ENCODE measurements at regions of chr12 and their contacts with region 1.

Region 1: DNA sequence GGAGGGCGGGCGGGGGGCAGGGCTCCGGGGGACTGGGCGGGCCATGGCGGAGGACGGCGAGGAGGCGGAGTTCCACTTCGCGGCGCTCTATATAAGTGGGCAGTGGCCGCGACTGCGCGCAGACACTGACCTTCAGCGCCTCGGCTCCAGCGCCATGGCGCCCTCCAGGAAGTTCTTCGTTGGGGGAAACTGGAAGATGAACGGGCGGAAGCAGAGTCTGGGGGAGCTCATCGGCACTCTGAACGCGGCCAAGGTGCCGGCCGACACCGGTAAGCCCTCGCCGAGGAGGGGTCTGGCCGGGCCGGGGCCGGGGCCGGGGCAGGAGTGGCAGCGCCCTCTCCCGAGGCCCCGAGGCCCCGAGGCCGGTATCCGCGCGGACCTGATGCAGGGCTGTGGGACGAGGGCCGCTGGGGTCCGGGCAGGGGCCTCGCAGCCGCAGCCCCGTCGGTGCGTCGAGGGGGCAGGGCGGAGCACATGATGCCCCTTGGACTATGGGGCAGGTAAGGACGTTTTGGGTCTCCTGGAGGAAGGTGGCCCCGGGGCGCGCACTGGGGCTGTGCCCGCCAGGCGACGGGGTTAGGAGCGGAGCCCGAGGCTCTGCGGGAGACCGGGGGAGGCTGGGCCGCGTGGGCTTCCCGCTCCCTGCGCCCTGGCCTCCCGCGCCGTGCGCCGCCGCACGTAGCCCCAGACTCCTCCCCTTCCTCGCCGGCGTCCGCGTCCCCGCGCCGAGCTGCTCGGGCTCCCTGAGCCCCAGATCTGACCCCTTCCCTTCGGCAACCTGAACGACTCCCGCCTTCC is at the start of gene TPI1:
- DNase-seq: peak; percentile 48 to 86 (median 77)
- ATAC-seq: peak; percentile 70
- H3K4me3 ChIP-seq: peak within 1 kb of the TSS; percentile 54 to 64
- H3K4me3 Mint-ChIP-seq: peak within 1 kb of the TSS; percentile 89
- H3K27ac ChIP-seq: peak within 1 kb of the TSS; percentile 53 to 81
- H3K27ac Mint-ChIP-seq: peak within 1 kb of the TSS; percentile 85
- H3K4me1 ChIP-seq: peaks cover 49% of the 10 kb centered on the region
- H3K4me1 Mint-ChIP-seq: peaks cover 57% of the 10 kb centered on the region
- H3K27me3 ChIP-seq: no peaks in the 10 kb centered on the region
- H3K27me3 Mint-ChIP-seq: no peaks in the 10 kb centered on the region
- CTCF ChIP-seq: no peak
- total RNA-seq, gene TPI1: 59.6 to 64.0 TPM

Region 2: DNA sequence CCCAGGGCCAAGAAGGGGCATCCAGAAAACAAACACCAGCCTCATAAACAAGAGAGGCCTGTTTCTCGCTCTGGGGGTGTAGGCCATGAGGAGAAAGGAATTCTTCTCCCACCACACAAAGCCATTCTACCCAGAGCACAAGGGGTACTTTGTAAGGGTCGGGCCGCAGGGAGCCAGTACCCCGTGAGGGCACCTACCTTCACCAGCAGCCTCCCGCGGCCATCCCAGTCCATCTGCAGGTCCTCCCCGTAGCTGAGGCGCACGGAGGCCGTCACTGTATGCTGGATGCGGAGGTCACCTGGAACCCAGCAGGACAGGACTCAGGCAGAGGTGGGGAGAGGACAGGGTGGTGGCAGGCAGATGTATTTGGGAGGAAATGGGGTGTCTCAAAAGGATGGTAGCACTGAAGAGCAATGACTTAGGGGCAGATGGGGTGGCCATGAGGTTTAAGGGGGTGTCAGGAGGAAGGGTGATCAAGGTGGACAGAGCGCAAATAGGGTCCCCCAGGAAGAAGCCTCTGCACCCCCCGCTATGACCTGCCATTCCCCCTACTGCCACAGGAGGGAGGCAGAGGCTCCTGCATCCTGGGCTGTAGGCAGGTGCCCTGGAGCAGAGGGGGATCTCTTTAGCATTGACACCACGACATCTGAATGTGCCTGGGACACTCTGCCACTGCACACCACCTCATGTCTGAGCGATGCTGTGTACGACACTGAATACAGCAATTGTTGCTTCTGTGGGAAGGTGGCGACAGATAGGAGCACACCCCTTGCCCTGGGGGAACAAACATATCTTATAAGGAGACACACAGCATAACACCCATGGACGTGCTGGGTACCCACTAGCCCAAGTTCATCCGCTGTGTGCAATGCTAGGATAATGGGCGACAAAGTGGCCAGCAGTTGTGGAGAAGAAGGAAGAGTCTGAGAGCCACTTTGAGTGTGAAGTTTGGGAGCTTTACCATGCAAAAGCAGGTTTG is 804.6 kb before region 1 on chr12:
- CTCF ChIA-PET with region 1: no interaction called
- POLR2A ChIA-PET with region 1: no interaction called
- intact Hi-C with region 1: no loop called
- DNase-seq: peak; percentile 39 to 81 (median 64)
- ATAC-seq: peak; percentile 99
- H3K4me3 ChIP-seq: no peak overlapping the region
- H3K4me3 Mint-ChIP-seq: no peak overlapping the region
- H3K27ac ChIP-seq: no peak overlapping the region
- H3K27ac Mint-ChIP-seq: no peak overlapping the region
- H3K4me1 ChIP-seq: no peaks in the 10 kb centered on the region
- H3K4me1 Mint-ChIP-seq: peaks cover 3% of the 10 kb centered on the region
- H3K27me3 ChIP-seq: no peaks in the 10 kb centered on the region
- H3K27me3 Mint-ChIP-seq: peaks cover 3% of the 10 kb centered on the region
- CTCF ChIP-seq: peak; percentile 84

Region 3: DNA sequence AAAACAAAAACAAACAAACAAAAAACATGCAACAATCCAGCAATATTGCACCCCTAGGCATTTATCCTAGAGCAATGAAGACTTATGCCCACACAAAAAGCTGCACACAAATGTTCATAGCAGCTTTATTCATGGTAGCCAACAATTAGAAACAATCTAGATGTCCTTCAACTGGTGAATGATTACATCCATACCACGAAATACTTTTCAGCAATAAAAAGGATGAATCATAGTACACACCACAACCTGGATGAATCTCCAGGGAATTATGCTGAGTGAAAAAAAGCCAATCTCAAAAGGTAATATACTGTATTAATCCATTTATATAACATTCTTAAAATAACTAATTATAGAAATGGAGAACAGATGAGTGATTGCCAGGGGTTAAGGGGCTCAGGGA is 60.4 kb before region 1 on chr12:
- CTCF ChIA-PET with region 1: no interaction called
- POLR2A ChIA-PET with region 1: no interaction called
- intact Hi-C with region 1: no loop called
- DNase-seq: no peak
- ATAC-seq: no peak
- H3K4me3 ChIP-seq: no peak overlapping the region
- H3K4me3 Mint-ChIP-seq: no peak overlapping the region
- H3K27ac ChIP-seq: no peak overlapping the region
- H3K27ac Mint-ChIP-seq: no peak overlapping the region
- H3K4me1 ChIP-seq: no peaks in the 10 kb centered on the region
- H3K4me1 Mint-ChIP-seq: no peaks in the 10 kb centered on the region
- H3K27me3 ChIP-seq: no peaks in the 10 kb centered on the region
- H3K27me3 Mint-ChIP-seq: no peaks in the 10 kb centered on the region
- CTCF ChIP-seq: no peak

Region 4: DNA sequence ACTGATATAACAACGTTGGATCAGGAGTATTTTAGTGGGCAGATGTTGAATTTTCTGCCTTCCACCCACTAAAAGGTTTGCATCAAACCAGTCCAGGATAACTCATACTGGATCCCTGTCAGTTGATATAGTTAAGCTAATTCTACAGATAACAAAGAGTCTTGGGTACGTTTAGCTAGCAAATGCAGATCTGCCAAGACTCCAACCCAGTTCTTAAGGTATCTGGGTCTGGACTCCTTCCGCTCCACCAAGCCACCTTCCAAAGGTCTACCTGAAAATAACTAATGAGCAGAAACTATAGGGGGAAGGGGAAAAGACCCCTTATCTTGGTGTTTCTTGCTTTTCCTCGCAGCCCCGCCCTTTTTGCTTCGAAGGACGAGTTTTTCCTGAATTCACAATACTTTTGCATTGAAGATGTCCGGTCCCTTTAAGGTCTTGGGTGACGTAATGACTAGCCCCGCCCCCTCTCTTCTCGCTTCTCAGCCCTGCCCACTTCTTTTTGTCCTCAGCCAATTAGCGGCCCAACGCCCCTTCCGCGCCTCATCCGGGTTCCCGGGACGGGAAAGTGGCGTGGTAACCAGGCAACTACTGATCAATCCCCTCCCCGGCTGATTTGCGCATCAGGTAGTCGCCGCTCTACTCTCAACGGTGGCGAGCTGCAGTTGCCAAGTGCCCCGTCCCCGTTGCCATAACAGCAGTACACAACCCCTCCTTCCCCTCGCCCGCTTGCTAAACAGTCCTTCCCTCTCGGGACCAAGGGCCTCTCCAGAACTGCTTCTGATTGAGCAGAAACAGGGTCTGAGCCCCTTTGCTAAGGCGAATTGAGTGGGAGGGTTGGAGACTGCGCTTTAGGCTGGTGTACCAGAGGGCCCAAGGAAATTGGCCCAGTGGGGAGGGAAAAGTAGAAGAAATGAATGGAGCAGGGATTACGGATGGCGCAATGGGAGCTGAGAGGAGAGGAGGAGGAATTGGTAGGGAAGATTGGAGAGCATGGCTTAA is 37.0 kb after region 1 on chr12 and contains the start of gene LRRC23:
- CTCF ChIA-PET with region 1: interaction called, 10 read pairs
- POLR2A ChIA-PET with region 1: interaction called, 8 read pairs
- intact Hi-C with region 1: no loop called
- DNase-seq: peak; percentile 92 to 99 (median 97)
- ATAC-seq: peak; percentile 96
- H3K4me3 ChIP-seq: peak within 1 kb of the TSS; percentile 56 to 64
- H3K4me3 Mint-ChIP-seq: peak within 1 kb of the TSS; percentile 5
- H3K27ac ChIP-seq: peak within 1 kb of the TSS; percentile 86 to 88
- H3K27ac Mint-ChIP-seq: no peak within 1 kb of the TSS
- H3K4me1 ChIP-seq: peaks cover 15% of the 10 kb centered on the region
- H3K4me1 Mint-ChIP-seq: no peaks in the 10 kb centered on the region
- H3K27me3 ChIP-seq: no peaks in the 10 kb centered on the region
- H3K27me3 Mint-ChIP-seq: no peaks in the 10 kb centered on the region
- CTCF ChIP-seq: no peak
- total RNA-seq, gene LRRC23: 6.5 to 7.2 TPM

Region 5: DNA sequence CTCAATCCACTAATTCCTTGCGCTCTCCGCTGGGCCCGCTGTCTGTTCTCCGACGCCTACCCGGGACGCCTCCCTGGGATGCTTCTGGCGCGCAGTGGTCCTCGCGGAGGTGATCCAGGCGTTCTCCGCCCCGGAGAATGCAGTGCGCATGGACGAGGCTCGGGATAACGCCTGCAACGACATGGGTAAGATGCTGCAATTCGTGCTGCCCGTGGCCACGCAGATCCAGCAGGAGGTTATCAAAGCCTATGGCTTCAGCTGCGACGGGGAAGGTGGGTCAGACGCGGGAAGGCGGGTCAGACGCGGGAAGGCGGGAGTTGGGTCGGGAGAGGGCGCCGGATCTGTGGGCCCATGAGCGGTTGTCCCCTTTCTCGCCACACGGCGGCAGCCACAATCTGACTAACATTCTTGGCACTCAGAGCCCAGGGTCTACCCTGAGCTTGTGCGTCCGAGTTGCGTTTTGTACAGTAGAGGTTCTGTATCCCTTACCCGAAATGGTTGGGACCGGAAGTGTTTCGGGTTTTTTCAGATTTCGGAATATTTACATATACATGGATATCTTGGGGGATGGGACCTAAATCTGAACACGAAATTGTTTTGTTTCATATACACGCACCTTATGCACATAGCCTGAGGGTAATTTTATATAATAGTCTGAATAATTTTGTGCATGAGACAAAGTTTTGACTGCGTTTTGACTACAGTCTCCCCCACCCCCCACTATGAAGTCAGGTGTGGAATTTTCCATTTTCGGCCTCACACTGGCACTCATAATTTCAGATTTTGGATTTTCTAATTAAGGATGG is 77.0 kb after region 1 on chr12:
- CTCF ChIA-PET with region 1: interaction called, 75 read pairs
- POLR2A ChIA-PET with region 1: interaction called, 45 read pairs
- intact Hi-C with region 1: no loop called
- DNase-seq: peak; percentile 67 to 94 (median 89)
- ATAC-seq: peak; percentile 51
- H3K4me3 ChIP-seq: peak overlapping the region; percentile 90 to 97
- H3K4me3 Mint-ChIP-seq: peak overlapping the region; percentile 99
- H3K27ac ChIP-seq: peak overlapping the region; percentile 94 to 97
- H3K27ac Mint-ChIP-seq: peak overlapping the region; percentile 100
- H3K4me1 ChIP-seq: peaks cover 56% of the 10 kb centered on the region
- H3K4me1 Mint-ChIP-seq: peaks cover 63% of the 10 kb centered on the region
- H3K27me3 ChIP-seq: no peaks in the 10 kb centered on the region
- H3K27me3 Mint-ChIP-seq: no peaks in the 10 kb centered on the region
- CTCF ChIP-seq: peak; percentile 87

Region 6: DNA sequence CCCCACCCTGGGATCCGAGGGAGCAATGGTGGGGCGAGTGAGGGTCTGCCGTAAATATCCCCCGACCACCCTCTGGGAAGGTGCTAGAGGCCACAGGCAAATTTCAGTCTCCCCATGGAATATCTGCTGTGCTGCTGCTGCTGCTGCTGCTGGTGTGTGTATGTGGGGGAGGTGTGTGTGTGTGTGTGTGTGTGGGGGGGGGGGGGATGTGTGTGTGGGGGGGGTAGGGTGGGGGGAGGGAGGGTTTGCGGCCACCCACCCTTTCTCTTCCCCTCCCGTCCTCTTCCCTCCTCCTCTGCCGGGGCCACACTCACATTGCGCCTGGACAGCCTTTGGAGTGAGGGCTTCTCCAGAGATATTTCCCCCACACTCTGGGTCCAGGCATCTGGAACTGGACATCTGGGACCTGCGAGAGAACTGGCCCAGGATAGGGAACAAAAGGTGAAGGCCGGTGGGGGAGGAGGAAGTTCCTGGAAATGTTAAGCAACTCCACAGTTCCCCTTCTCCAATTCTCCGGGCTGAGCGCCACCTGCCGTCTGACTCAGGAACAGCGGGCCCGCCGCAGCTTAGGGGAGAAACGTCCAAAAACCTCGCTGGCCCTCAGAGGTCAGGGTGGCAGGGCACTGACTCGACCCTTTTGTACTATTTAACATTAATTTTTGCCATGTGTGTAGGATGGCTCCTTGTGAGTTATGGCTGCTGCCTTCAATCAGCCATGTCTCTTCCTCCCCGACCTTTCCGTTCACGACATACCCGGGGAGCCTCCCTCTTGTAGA is 241.4 kb after region 1 on chr12 and contains the start of gene C1RL:
- CTCF ChIA-PET with region 1: interaction called, 43 read pairs
- POLR2A ChIA-PET with region 1: interaction called, 7 read pairs
- intact Hi-C with region 1: loop called (anchors 1 to 2 kb)
- DNase-seq: peak; percentile 58 to 85 (median 77)
- ATAC-seq: peak; percentile 46
- H3K4me3 ChIP-seq: peak within 1 kb of the TSS; percentile 88 to 97
- H3K4me3 Mint-ChIP-seq: peak within 1 kb of the TSS; percentile 94
- H3K27ac ChIP-seq: peak within 1 kb of the TSS; percentile 67 to 80
- H3K27ac Mint-ChIP-seq: peak within 1 kb of the TSS; percentile 93
- H3K4me1 ChIP-seq: peaks cover 16% of the 10 kb centered on the region
- H3K4me1 Mint-ChIP-seq: peaks cover 44% of the 10 kb centered on the region
- H3K27me3 ChIP-seq: no peaks in the 10 kb centered on the region
- H3K27me3 Mint-ChIP-seq: no peaks in the 10 kb centered on the region
- CTCF ChIP-seq: peak; percentile 90
- total RNA-seq, gene C1RL: 8.0 to 9.0 TPM